BJ (cell line): ENCODE measurements at regions of chr10 and their contacts with region 1.

Region 1: GRCh38 chr10:48541144-48541795 is 63.6 kb downstream of the ARHGAP22 start:
- DNase-seq: no peak
- H3K4me3 ChIP-seq: no peak overlapping the region
- H3K27me3 ChIP-seq: no peaks in the 10 kb centered on the region
- CTCF ChIP-seq: no peak

Region 2: GRCh38 chr10:48523820-48524758 is 17.2 kb before region 1 on chr10:
- CTCF ChIA-PET with region 1: interaction called, 24 read pairs
- POLR2A ChIA-PET with region 1: no interaction called
- DNase-seq: no peak
- H3K4me3 ChIP-seq: peak overlapping the region; percentile 56
- H3K27me3 ChIP-seq: no peaks in the 10 kb centered on the region
- CTCF ChIP-seq: peak; percentile 53

Region 3: GRCh38 chr10:48551861-48552591 is 10.8 kb after region 1 on chr10:
- CTCF ChIA-PET with region 1: interaction called, 20 read pairs
- POLR2A ChIA-PET with region 1: no interaction called
- DNase-seq: no peak
- H3K4me3 ChIP-seq: no peak overlapping the region
- H3K27me3 ChIP-seq: no peaks in the 10 kb centered on the region
- CTCF ChIP-seq: peak; percentile 75